ENCODE measurements at regions of chr3 and their contacts with region 1.

Region 1: DNA sequence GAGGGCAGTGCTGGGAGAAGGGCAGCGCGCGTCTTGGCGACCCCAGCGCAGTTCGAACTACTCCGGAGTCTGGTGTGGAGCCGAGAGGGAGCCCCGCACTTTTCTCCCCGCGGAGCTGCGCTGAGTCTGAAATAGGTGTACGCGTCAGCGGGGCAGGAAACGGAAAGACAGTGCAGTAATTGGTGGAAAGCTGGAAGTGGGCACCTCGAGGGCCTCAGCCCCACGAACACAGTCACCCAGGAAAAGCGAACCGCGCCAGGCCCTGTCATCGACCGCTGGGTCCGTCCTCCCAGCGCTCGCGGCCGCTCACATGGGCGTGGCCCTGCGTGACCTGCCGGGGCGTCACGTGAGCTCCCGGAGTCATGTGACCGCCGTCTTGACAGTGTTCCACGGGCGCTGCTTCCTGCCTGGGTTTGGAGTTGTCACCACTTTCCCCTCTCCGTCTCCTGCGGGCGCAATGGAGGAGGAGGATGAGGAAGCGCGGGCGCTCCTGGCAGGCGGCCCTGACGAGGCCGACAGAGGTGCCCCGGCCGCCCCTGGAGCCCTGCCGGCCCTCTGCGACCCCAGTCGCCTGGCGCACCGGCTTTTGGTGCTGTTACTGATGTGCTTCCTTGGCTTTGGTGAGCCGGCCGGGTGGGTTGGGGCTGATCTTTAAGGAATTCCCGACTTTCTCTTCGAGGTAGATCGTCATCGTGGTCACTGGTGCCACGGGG is at the start of gene MFSD1:
- DNase-seq: peak; percentile 85 to 92
- H3K4me3 ChIP-seq: peak within 1 kb of the TSS; percentile 74
- H3K4me1 ChIP-seq: peaks cover 15% of the 10 kb centered on the region
- H3K27me3 ChIP-seq: no peaks in the 10 kb centered on the region

Region 2: DNA sequence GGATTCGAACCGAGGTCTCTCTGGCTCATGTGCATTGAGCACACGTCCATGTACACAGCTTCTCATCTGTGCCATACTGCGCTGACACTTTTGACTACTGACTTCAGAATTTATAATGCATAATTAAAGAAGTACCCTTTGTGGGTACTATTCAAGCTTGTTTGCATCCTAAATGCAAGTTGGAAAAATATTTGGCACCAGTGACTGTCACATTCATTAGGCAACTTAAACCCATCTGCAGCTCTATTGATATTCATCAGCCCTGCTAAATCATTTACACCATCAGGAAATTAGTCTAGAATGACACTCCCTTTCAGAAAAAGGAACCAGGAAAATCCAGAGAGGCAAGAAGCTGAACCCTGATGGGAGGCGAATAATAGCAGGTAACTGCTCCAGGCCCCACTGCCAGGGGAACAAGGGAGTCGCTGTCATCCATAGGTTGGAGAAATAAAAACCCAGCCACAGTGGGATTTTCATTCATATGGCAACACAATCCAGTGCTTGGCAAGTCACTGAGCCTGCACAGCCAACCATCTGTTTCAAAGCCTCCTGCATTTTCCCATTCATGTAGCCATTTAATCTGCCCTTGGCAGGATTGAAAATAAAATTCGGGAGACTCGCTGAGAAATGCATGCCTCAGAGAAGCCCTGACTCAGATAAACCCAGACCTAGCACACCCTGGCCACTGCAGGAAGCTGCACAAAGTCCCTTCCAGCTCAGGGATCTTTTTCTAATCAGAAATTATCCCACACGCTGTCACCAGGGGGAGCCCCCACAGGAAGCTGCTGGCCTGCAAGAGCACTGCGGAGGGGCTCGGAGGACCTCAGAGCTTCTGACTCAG is 1195.6 kb before region 1 on chr3:
- in situ Hi-C with region 1: loop called (anchors 25 kb)
- DNase-seq: peak; percentile 45 to 83
- H3K4me3 ChIP-seq: no peak overlapping the region
- H3K4me1 ChIP-seq: no peaks in the 10 kb centered on the region
- H3K27me3 ChIP-seq: peaks cover 5% of the 10 kb centered on the region; the same call in 1 of the 2 replicates

Region 3: GRCh38 chr3:159047361-159047760 is 245.5 kb after region 1 on chr3:
- in situ Hi-C with region 1: no loop called
- DNase-seq: no peak
- H3K4me3 ChIP-seq: no peak overlapping the region
- H3K4me1 ChIP-seq: no peaks in the 10 kb centered on the region
- H3K27me3 ChIP-seq: no peaks in the 10 kb centered on the region